ENCODE measurements at regions of chr2 and their contacts with region 1.

Region 1: GRCh38 chr2:240579771-240580614 is 6.5 kb upstream of the CAPN10 start:
- DNase-seq: peak; percentile 63
- ATAC-seq: peak; percentile 21
- H3K4me3 ChIP-seq: no peak overlapping the region
- H3K4me3 Mint-ChIP-seq: no peak overlapping the region
- H3K27ac ChIP-seq: no peak overlapping the region
- H3K27ac Mint-ChIP-seq: peak overlapping the region; percentile 70
- H3K4me1 ChIP-seq: peaks cover 9 to 27% of the 10 kb centered on the region in 2 donors
- H3K4me1 Mint-ChIP-seq: peaks cover 40% of the 10 kb centered on the region
- H3K27me3 ChIP-seq: no peaks in the 10 kb centered on the region
- H3K27me3 Mint-ChIP-seq: no peaks in the 10 kb centered on the region
- CTCF ChIP-seq: peak; percentile 13

Region 2: GRCh38 chr2:239991689-239992314 is 588.2 kb before region 1 on chr2:
- CTCF ChIA-PET with region 1: no interaction called
- POLR2A ChIA-PET with region 1: no interaction called
- intact Hi-C with region 1: no loop called
- DNase-seq: peak; percentile 65
- ATAC-seq: peak; percentile 54
- H3K4me3 ChIP-seq: no peak overlapping the region
- H3K4me3 Mint-ChIP-seq: no peak overlapping the region
- H3K27ac ChIP-seq: no peak overlapping the region
- H3K27ac Mint-ChIP-seq: no peak overlapping the region
- H3K4me1 ChIP-seq: no peaks in the 10 kb centered on the region
- H3K4me1 Mint-ChIP-seq: no peaks in the 10 kb centered on the region
- H3K27me3 ChIP-seq: no peaks in the 10 kb centered on the region
- H3K27me3 Mint-ChIP-seq: no peaks in the 10 kb centered on the region
- CTCF ChIP-seq: peak; percentile 98

Region 3: DNA sequence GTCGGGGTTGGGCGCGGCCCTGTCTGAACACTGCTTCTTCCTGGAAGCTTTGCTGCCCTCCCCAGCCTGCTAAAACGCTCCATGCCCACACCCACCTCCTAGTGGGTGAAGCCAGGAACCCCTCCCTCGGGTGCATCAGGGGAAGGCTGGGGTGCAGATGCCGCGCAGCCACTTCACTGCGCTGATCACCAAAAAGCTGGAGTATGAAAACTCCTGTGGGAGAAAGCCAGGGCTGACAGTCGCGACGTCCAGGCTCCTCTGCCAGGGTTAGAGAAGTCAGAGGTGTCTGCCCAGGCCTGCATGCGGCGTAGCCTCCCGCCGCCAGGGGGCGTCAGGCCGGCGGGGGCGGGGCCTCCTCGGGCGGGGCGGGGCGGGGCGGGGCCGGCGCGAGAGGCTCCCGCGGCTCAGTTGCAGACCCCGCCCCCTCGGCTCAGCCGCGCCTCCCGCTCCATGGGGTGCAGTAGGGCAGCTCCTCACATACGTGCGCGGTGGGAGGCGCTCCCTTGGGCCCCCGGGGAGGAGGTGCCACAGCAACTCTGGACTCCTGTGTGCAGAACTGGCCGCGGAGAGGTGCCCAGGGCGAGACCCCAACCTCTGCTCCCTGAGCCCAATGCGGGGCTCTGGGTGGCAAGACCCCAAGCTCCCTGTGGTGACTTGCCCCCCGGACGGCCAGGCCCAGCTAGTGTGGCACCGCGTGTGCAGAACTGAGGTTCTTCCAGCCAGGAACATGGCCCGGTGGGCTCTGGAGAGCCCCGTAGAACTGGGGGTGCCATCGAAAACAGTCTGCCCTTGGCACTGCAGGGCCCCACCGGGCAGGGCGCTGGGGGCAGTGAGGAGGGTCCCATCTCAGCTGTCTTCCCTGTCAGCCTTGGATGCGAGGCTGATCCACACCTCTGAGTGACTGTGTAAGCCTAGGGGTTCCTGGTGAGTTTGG is 13.5 kb before region 1 on chr2:
- CTCF ChIA-PET with region 1: interaction called, 126 read pairs
- POLR2A ChIA-PET with region 1: interaction called, 97 read pairs
- intact Hi-C with region 1: no loop called
- DNase-seq: peak; percentile 93
- ATAC-seq: peak; percentile 64
- H3K4me3 ChIP-seq: peak overlapping the region; percentile 26 to 76 (median 51)
- H3K4me3 Mint-ChIP-seq: peak overlapping the region; percentile 94
- H3K27ac ChIP-seq: peak overlapping the region; percentile 84 to 86
- H3K27ac Mint-ChIP-seq: peak overlapping the region; percentile 99
- H3K4me1 ChIP-seq: peaks cover 64 to 75% of the 10 kb centered on the region in 2 donors
- H3K4me1 Mint-ChIP-seq: peaks cover 78% of the 10 kb centered on the region
- H3K27me3 ChIP-seq: no peaks in the 10 kb centered on the region
- H3K27me3 Mint-ChIP-seq: no peaks in the 10 kb centered on the region
- CTCF ChIP-seq: peak; percentile 93

Measured in B cell (primary cell).